Mammary epithelial cell (primary cell): ENCODE measurements at regions of chr5 and their contacts with region 1.

Region 1: GRCh38 chr5:146731909-146732659 is 146.5 kb downstream of the PPP2R2B start:
- DNase-seq: peak; percentile 85
- H3K4me3 ChIP-seq: no peak overlapping the region
- H3K27ac ChIP-seq: peak overlapping the region; percentile 47
- H3K4me1 ChIP-seq: peaks cover 18% of the 10 kb centered on the region
- H3K27me3 ChIP-seq: no peaks in the 10 kb centered on the region
- CTCF ChIP-seq: no peak

Region 2: GRCh38 chr5:146647656-146648199 is 84.4 kb before region 1 on chr5:
- CTCF ChIA-PET with region 1: no interaction called
- dilution Hi-C with region 1: no loop called
- in situ Hi-C with region 1: no loop called
- intact Hi-C with region 1: no loop called
- DNase-seq: peak; percentile 22
- H3K4me3 ChIP-seq: no peak overlapping the region
- H3K27ac ChIP-seq: no peak overlapping the region
- H3K4me1 ChIP-seq: no peaks in the 10 kb centered on the region
- H3K27me3 ChIP-seq: no peaks in the 10 kb centered on the region
- CTCF ChIP-seq: no peak

Region 3: DNA sequence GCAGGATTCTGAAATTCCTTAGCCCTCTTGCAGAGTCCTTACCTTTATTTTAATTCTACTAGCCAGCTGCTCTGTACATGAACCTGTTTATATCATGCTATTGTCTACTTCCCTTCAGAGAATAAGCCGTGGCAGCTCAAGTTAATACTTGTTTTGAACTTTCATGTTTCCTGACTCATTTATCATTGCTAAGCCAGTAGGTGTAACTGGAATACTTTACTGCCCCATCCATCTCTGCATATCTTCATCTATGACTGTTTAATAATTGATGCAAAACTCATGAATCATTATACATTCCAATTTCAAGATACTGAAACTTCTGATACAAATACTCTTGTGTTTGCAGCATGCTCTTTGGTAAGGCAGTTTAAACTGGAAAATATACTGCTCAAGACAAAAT is 28.2 kb before region 1 on chr5:
- CTCF ChIA-PET with region 1: no interaction called
- dilution Hi-C with region 1: no loop called
- in situ Hi-C with region 1: no loop called
- intact Hi-C with region 1: loop called (anchors 1 kb)
- DNase-seq: peak; percentile 94
- H3K4me3 ChIP-seq: no peak overlapping the region
- H3K27ac ChIP-seq: peak overlapping the region; percentile 94
- H3K4me1 ChIP-seq: peaks cover 31% of the 10 kb centered on the region
- H3K27me3 ChIP-seq: no peaks in the 10 kb centered on the region
- CTCF ChIP-seq: no peak